ENCODE measurements at regions of chr5 and their contacts with region 1.

Region 1: DNA sequence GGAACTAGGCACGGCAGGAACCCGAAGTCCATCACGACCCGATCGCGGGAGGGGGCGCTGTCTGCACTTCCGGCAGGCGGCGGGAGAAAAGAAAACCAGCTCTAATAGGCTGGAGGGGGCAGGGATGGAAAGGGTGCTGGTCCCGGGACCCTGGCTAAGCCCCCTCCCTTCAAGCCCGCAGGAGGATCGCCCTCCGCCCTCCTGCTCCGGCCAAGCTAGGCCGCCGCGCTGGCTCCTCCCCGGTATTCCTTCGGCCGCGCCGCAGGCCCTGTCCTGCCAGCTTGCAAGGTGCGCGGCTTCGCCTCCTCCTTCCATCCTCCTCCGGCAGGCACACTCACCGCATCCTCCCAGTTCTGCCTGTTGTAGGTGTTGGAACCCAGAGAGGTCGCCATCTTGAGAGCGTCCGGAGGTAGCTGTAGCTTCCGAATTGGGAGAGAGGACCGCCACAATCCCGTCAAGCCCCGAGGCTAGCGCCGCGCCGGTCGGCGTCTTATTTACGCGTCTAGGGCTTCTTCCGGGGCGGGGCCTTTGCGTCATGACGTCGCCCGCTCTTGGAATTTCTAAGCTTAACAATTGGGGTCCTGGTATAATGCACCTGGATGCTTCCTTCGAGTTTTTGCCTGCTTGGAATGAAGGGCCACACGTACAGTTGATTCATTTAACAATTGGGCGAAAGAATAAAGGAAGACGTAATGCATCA is at the start of gene RBM22:
- DNase-seq: peak; percentile 95
- H3K4me3 Mint-ChIP-seq: no peak within 1 kb of the TSS
- H3K27ac Mint-ChIP-seq: no peak within 1 kb of the TSS
- H3K4me1 Mint-ChIP-seq: peaks cover 6% of the 10 kb centered on the region
- H3K27me3 Mint-ChIP-seq: no peaks in the 10 kb centered on the region
- CTCF ChIP-seq: peak; percentile 76
- total RNA-seq, gene RBM22: 66.0 and 66.9 TPM in 2 replicates

Region 2: DNA sequence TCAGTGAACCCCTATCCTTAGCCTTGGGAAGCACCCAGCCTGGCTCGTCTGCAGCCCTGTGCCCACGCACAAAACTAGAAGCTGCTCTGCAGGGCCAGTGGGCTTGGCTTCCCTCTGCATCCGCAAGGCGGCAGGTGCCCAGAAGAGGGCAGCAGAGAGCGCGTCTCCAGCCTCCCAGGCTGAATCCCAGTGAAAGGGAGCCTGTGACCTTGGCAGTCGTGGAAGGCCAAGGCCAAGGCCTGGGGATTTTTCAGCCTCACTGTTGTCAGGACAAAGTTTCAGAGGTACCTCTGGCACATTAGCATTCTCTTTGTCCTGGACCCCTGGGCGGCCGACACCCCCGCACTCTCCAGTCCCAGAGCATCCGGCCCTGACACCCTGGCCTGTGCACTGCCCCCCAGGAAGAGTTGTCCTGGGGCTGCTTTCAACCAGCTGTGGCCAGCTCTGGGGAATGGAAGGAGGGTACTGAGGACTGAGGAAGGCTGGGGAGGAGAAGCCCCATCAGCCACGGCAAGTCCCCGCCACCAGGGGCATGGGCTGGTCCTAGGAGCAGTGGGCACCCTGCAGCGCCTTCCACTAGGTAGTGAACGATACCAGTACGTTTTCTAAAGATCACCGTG is 1258.1 kb before region 1 on chr5:
- CTCF ChIA-PET with region 1: no interaction called
- POLR2A ChIA-PET with region 1: no interaction called
- intact Hi-C with region 1: no loop called
- DNase-seq: peak; percentile 88
- H3K4me3 Mint-ChIP-seq: peak overlapping the region; percentile 41
- H3K27ac Mint-ChIP-seq: peak overlapping the region; percentile 84
- H3K4me1 Mint-ChIP-seq: peaks cover 65% of the 10 kb centered on the region
- H3K27me3 Mint-ChIP-seq: no peaks in the 10 kb centered on the region
- CTCF ChIP-seq: peak; percentile 96

Region 3: GRCh38 chr5:150449517-150450339 is 251.0 kb before region 1 on chr5 and contains the start of gene RPS14:
- CTCF ChIA-PET with region 1: no interaction called
- POLR2A ChIA-PET with region 1: interaction called, 22 read pairs
- intact Hi-C with region 1: no loop called
- DNase-seq: peak; percentile 98
- H3K4me3 Mint-ChIP-seq: peak within 1 kb of the TSS; percentile 85
- H3K27ac Mint-ChIP-seq: peak within 1 kb of the TSS; percentile 100
- H3K4me1 Mint-ChIP-seq: peaks cover 22% of the 10 kb centered on the region
- H3K27me3 Mint-ChIP-seq: no peaks in the 10 kb centered on the region
- CTCF ChIP-seq: peak; percentile 92
- total RNA-seq, gene RPS14: 5,481 and 5,921 TPM in 2 replicates

Region 4: GRCh38 chr5:150640311-150641005 is 60.3 kb before region 1 on chr5 and contains the start of gene SYNPO:
- CTCF ChIA-PET with region 1: interaction called, 13 read pairs
- POLR2A ChIA-PET with region 1: interaction called, 32 read pairs
- intact Hi-C with region 1: no loop called
- DNase-seq: peak; percentile 99
- H3K4me3 Mint-ChIP-seq: peak within 1 kb of the TSS; percentile 68
- H3K27ac Mint-ChIP-seq: peak within 1 kb of the TSS; percentile 86
- H3K4me1 Mint-ChIP-seq: peaks cover 94% of the 10 kb centered on the region
- H3K27me3 Mint-ChIP-seq: no peaks in the 10 kb centered on the region
- CTCF ChIP-seq: no peak
- total RNA-seq, gene SYNPO: 6.3 and 7.1 TPM in 2 replicates

Region 5: DNA sequence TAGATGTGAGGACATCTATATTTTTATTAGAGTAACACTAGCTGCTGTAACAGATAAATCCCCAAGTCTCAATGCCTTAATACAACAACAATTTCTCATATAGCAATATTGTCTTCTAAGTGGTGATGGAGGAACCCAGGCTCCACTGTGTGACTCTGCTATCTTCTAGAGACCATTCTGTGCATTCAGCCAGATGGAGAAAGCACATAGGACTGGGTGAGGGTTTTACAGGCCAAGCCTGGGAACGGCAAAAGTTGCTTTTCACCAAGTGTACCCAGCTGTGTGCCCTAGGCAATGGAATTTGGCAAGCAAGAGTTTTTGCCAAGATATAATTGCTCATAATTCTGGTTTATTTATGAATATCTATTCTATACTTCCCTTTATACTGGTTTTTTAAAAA is 11.6 kb before region 1 on chr5:
- CTCF ChIA-PET with region 1: interaction called, 12 read pairs
- POLR2A ChIA-PET with region 1: interaction called, 12 read pairs
- intact Hi-C with region 1: no loop called
- DNase-seq: no peak
- H3K4me3 Mint-ChIP-seq: no peak overlapping the region
- H3K27ac Mint-ChIP-seq: peak overlapping the region; percentile 36
- H3K4me1 Mint-ChIP-seq: no peaks in the 10 kb centered on the region
- H3K27me3 Mint-ChIP-seq: no peaks in the 10 kb centered on the region
- CTCF ChIP-seq: no peak

Region 6: GRCh38 chr5:150734579-150735384 is 34.0 kb after region 1 on chr5:
- CTCF ChIA-PET with region 1: interaction called, 12 read pairs
- POLR2A ChIA-PET with region 1: interaction called, 5 read pairs
- intact Hi-C with region 1: no loop called
- DNase-seq: peak; percentile 22
- H3K4me3 Mint-ChIP-seq: no peak overlapping the region
- H3K27ac Mint-ChIP-seq: no peak overlapping the region
- H3K4me1 Mint-ChIP-seq: peaks cover 22% of the 10 kb centered on the region
- H3K27me3 Mint-ChIP-seq: no peaks in the 10 kb centered on the region
- CTCF ChIP-seq: no peak

Region 7: GRCh38 chr5:150758531-150759333 is 58.0 kb after region 1 on chr5 and contains the start of gene DCTN4:
- CTCF ChIA-PET with region 1: interaction called, 15 read pairs
- POLR2A ChIA-PET with region 1: interaction called, 101 read pairs
- intact Hi-C with region 1: no loop called
- DNase-seq: peak; percentile 100
- H3K4me3 Mint-ChIP-seq: no peak within 1 kb of the TSS
- H3K27ac Mint-ChIP-seq: no peak within 1 kb of the TSS
- H3K4me1 Mint-ChIP-seq: peaks cover 34% of the 10 kb centered on the region
- H3K27me3 Mint-ChIP-seq: no peaks in the 10 kb centered on the region
- CTCF ChIP-seq: no peak
- total RNA-seq, gene DCTN4: 122 and 143 TPM in 2 replicates

Region 8: DNA sequence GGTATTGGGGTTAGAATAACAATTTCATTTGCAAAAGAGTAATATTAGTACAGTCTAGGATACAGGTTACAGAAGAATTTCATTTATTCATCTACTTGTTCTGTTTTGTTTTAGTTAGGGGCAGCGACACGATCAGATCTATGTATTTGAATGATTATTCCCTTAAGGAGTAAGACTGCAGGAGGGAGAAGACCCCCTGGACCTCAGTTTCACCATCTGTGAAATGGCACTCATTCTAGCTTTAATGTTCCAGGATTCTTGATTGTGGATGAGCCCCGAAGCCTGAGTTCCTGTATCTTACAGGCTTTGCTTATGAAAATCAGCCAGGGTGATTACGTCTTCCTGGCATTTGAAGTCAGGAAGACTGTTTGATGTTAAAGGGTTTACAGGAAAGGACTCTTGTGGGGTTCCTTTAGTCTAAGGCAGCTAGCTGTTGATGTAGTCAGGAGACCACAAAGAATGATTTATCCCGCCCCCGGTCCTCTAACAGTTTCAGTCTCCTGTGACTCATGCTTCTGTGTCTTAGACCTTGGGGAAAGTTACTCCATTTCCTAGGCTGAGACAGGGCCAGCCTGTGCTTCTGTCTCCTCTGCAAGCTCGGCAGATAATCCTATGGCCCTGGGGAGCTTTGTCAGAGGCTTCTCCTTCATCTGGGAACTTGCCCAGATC is 89.3 kb after region 1 on chr5:
- CTCF ChIA-PET with region 1: interaction called, 9 read pairs
- POLR2A ChIA-PET with region 1: interaction called, 15 read pairs
- intact Hi-C with region 1: no loop called
- DNase-seq: peak; percentile 100
- H3K4me3 Mint-ChIP-seq: peak overlapping the region; percentile 65
- H3K27ac Mint-ChIP-seq: peak overlapping the region; percentile 95
- H3K4me1 Mint-ChIP-seq: peaks cover 48% of the 10 kb centered on the region
- H3K27me3 Mint-ChIP-seq: no peaks in the 10 kb centered on the region
- CTCF ChIP-seq: no peak

Measured in MCF 10A (cell line).